Calu3 (cell line): ENCODE measurements at regions of chr3 and their contacts with region 1.

Region 1: DNA sequence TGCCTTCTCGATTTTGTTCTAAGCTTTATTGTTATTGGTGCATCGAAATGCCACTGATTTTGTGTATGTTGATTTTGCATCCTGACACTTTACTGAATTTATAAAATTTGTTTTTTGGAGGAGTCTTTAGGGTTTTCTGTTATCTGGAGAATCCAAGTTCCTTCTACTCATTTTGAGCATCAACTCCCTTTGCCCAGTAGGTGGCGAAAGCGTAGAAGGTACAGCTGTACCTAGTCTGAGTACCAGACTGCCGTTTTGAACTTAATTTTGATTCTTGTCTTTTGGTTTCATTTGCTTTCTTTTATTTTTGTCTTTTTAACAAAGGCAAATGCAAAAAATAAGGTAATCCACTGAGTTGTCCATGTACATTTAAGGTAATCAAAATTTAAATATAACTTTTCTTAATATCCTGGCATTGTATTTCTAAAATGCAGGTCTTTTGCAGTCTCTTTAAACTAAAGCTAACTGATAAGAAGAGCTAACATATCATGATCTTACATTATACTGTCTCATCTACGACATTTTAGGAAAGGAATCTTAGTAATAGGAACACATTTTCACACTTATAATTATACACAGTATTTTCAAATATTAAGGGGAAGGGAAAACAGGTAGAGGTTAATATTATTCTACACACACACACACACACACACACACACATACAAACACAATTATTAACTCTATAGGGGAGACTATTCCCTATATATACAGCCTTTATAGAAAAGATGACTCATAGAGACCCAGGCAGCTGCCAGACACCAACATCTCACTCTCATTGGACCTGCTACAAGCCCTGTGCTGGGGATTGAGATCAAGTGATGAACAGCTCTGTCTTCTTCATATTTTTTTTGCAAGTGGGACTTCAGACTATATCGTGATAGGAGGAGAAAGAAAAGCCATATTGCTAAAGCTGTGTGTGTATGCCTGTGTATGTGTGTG is 71.7 kb downstream of the SYNPR start:
- DNase-seq: peak; percentile 59
- H3K4me3 Mint-ChIP-seq: no peak overlapping the region
- H3K27ac Mint-ChIP-seq: no peak overlapping the region
- H3K4me1 Mint-ChIP-seq: peaks cover 18% of the 10 kb centered on the region
- H3K27me3 Mint-ChIP-seq: peaks cover under 1% of the 10 kb centered on the region
- CTCF ChIP-seq: peak; percentile 62

Region 2: DNA sequence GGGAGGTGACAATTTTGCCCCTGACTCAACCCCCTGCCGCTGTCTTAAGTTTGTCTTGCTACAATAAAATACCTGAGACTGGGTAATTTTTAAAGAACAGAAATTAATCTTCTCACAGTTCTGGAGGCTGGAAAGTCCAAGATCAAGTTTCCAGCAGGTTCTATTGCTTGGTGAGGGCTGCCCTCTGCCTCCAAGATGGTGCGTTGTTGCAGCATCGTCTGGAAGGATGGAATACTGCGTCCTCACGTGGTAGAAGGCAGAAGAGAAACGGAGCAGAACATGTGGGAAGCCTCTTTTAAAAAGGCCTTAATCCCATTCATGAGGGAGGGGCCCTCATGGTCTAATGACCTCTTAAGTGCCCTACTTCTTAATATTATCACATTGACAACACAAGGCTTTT is 215.4 kb after region 1 on chr3:
- CTCF ChIA-PET with region 1: no interaction called
- intact Hi-C with region 1: loop called (anchors 1 kb)
- DNase-seq: no peak
- H3K4me3 Mint-ChIP-seq: no peak overlapping the region
- H3K27ac Mint-ChIP-seq: no peak overlapping the region
- H3K4me1 Mint-ChIP-seq: peaks cover 4% of the 10 kb centered on the region
- H3K27me3 Mint-ChIP-seq: no peaks in the 10 kb centered on the region
- CTCF ChIP-seq: no peak

Region 3: DNA sequence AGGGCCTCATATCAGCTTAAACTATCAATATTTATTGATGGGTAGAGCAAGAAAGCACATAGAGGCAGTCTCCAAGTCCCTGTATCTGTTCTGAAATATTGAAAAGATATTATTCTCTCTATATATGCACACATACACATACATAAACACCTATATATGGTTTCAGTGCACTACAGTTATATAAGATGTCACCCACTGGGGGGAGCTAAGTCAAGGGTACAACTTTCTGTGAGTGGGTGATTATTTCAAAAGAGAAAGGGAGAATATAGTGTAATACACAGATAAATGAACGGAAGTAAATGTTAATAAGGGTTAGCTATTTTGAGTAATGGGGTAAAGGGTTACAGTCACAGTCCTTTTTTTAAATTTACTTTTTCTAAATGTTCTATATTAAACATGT is 311.4 kb after region 1 on chr3:
- CTCF ChIA-PET with region 1: interaction called, 17 read pairs
- intact Hi-C with region 1: loop called (anchors 1 kb)
- DNase-seq: peak; percentile 23
- H3K4me3 Mint-ChIP-seq: no peak overlapping the region
- H3K27ac Mint-ChIP-seq: no peak overlapping the region
- H3K4me1 Mint-ChIP-seq: peaks cover 1% of the 10 kb centered on the region
- H3K27me3 Mint-ChIP-seq: no peaks in the 10 kb centered on the region
- CTCF ChIP-seq: no peak

Region 4: GRCh38 chr3:63687278-63688225 is 337.7 kb after region 1 on chr3:
- CTCF ChIA-PET with region 1: no interaction called
- intact Hi-C with region 1: no loop called
- DNase-seq: no peak
- H3K4me3 Mint-ChIP-seq: no peak overlapping the region
- H3K27ac Mint-ChIP-seq: no peak overlapping the region
- H3K4me1 Mint-ChIP-seq: no peaks in the 10 kb centered on the region
- H3K27me3 Mint-ChIP-seq: no peaks in the 10 kb centered on the region
- CTCF ChIP-seq: no peak

Region 5: GRCh38 chr3:63791974-63792545 is 442.2 kb after region 1 on chr3:
- CTCF ChIA-PET with region 1: interaction called, 6 read pairs
- intact Hi-C with region 1: loop called (anchors 5 kb)
- DNase-seq: peak; percentile 9
- H3K4me3 Mint-ChIP-seq: no peak overlapping the region
- H3K27ac Mint-ChIP-seq: no peak overlapping the region
- H3K4me1 Mint-ChIP-seq: no peaks in the 10 kb centered on the region
- H3K27me3 Mint-ChIP-seq: no peaks in the 10 kb centered on the region
- CTCF ChIP-seq: peak; percentile 35

Region 6: DNA sequence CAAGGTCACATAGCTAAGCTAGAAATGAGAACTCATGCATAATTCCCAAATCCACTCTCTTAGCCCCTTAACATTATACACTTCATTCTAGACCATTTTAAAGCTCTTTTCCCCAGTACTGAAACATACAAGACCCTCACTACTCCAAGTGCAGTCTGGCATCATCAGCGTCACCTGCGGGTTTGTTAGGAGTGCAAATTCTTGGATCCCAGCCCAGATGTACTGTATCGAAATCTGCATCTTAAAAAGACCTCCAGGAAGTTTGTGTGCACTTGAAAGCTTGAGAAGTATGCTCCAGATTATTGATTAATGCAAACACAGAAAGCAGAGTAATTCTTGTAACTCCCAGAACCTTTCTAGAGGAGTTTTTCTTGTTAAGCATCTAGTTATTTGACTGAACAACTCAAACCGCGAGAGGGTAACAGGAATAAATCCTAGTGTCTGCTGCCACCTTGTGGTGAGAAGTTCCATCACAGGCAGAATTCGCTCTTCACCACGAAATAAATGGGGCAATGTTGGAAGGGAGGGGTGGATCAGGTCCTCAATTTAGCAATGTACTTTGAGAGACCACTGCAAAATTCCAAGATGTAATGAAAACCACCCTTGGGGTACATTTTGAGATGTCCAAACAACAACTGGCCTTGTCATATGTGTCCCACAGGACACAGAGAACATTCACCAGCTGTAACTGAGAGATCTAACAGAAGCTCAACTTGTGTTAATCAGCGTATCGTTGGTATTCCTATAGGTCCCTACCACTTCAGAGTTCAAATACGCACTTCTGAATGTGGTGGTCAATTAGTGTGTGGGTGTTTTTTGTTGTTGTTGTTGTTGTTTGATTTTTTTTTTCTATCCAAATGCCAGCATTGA is 468.7 kb after region 1 on chr3:
- CTCF ChIA-PET with region 1: interaction called, 3 read pairs
- intact Hi-C with region 1: loop called (anchors 1 kb)
- DNase-seq: peak; percentile 66
- H3K4me3 Mint-ChIP-seq: no peak overlapping the region
- H3K27ac Mint-ChIP-seq: no peak overlapping the region
- H3K4me1 Mint-ChIP-seq: peaks cover 26% of the 10 kb centered on the region
- H3K27me3 Mint-ChIP-seq: no peaks in the 10 kb centered on the region
- CTCF ChIP-seq: peak; percentile 62

Region 7: GRCh38 chr3:63993653-63994079 is 643.8 kb after region 1 on chr3:
- CTCF ChIA-PET with region 1: no interaction called
- intact Hi-C with region 1: loop called (anchors 5 kb)
- DNase-seq: peak; percentile 56
- H3K4me3 Mint-ChIP-seq: no peak overlapping the region
- H3K27ac Mint-ChIP-seq: no peak overlapping the region
- H3K4me1 Mint-ChIP-seq: no peaks in the 10 kb centered on the region
- H3K27me3 Mint-ChIP-seq: no peaks in the 10 kb centered on the region
- CTCF ChIP-seq: peak; percentile 64